Activated CD8-positive, alpha-beta T cell treated with anti-CD3 and anti-CD28 coated beads for 36 hours (primary cell): ENCODE measurements at regions of chr1 and their contacts with region 1.

Region 1: GRCh38 chr1:107963601-107964335 is 1.2 kb downstream of the VAV3 start:
- DNase-seq: peak; percentile 70
- ATAC-seq: peak; percentile 74
- H3K4me3 Mint-ChIP-seq: peak overlapping the region; percentile 93
- H3K27ac Mint-ChIP-seq: peak overlapping the region; percentile 98
- H3K4me1 Mint-ChIP-seq: peaks cover 32% of the 10 kb centered on the region
- H3K27me3 Mint-ChIP-seq: no peaks in the 10 kb centered on the region
- CTCF ChIP-seq: no peak

Region 2: GRCh38 chr1:107897438-107898345 is 66.1 kb before region 1 on chr1:
- CTCF ChIA-PET with region 1: interaction called, 4 read pairs
- POLR2A ChIA-PET with region 1: no interaction called
- intact Hi-C with region 1: loop called (anchors 5 kb)
- DNase-seq: peak; percentile 20
- ATAC-seq: peak; percentile 76
- H3K4me3 Mint-ChIP-seq: peak overlapping the region; percentile 43
- H3K27ac Mint-ChIP-seq: peak overlapping the region; percentile 74
- H3K4me1 Mint-ChIP-seq: peaks cover 57% of the 10 kb centered on the region
- H3K27me3 Mint-ChIP-seq: no peaks in the 10 kb centered on the region
- CTCF ChIP-seq: peak; percentile 18